Endothelial cell of umbilical vein (primary cell): ENCODE measurements at regions of chr22 and their contacts with region 1.

Region 1: DNA sequence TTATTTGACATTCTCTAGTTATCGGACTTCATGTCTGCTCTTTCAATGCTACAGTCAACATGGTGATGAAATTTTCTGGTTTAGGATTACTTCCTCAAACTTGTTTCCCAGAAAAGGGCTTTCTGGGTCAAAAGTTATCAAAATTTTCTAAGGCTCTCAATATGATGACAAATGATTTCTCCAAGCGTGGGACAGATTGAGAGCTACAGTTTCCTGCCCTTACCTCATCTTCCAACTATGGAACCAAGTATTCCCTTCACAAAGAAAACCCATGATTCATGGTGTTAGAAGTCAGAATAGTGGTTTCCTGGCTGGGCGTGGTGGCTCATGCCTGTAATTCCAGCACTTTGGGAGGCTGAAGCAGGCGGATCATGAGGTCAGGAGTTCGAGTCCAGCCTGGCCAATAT is 17.8 kb downstream of the MYO18B start:
- DNase-seq: peak; percentile 97
- H3K4me3 ChIP-seq: no peak overlapping the region
- H3K27ac ChIP-seq: peak overlapping the region; percentile 77
- H3K4me1 ChIP-seq: peaks cover 19% of the 10 kb centered on the region
- H3K27me3 ChIP-seq: no peaks in the 10 kb centered on the region
- CTCF ChIP-seq: no peak
- POLR2A ChIP-seq: no peak

Region 2: GRCh38 chr22:25702040-25702439 is 57.8 kb before region 1 on chr22:
- CTCF ChIA-PET with region 1: no interaction called
- POLR2A ChIA-PET with region 1: no interaction called
- dilution Hi-C with region 1: no loop called
- intact Hi-C with region 1: loop called (anchors 5 kb)
- DNase-seq: peak; percentile 29
- H3K4me3 ChIP-seq: no peak overlapping the region
- H3K27ac ChIP-seq: no peak overlapping the region
- H3K4me1 ChIP-seq: no peaks in the 10 kb centered on the region
- H3K27me3 ChIP-seq: no peaks in the 10 kb centered on the region
- CTCF ChIP-seq: no peak
- POLR2A ChIP-seq: no peak

Region 3: GRCh38 chr22:25747245-25747944 is 12.4 kb before region 1 on chr22:
- CTCF ChIA-PET with region 1: interaction called, 4 read pairs
- POLR2A ChIA-PET with region 1: no interaction called
- dilution Hi-C with region 1: no loop called
- intact Hi-C with region 1: loop called (anchors 1 kb)
- DNase-seq: peak; percentile 88
- H3K4me3 ChIP-seq: no peak overlapping the region
- H3K27ac ChIP-seq: peak overlapping the region; percentile 88
- H3K4me1 ChIP-seq: peaks cover 23% of the 10 kb centered on the region
- H3K27me3 ChIP-seq: no peaks in the 10 kb centered on the region
- CTCF ChIP-seq: no peak
- POLR2A ChIP-seq: no peak

Region 4: GRCh38 chr22:25942856-25943411 is 183.1 kb after region 1 on chr22:
- CTCF ChIA-PET with region 1: no interaction called
- POLR2A ChIA-PET with region 1: no interaction called
- dilution Hi-C with region 1: no loop called
- intact Hi-C with region 1: no loop called
- DNase-seq: no peak
- H3K4me3 ChIP-seq: no peak overlapping the region
- H3K27ac ChIP-seq: no peak overlapping the region
- H3K4me1 ChIP-seq: no peaks in the 10 kb centered on the region
- H3K27me3 ChIP-seq: no peaks in the 10 kb centered on the region
- CTCF ChIP-seq: no peak
- POLR2A ChIP-seq: no peak

Region 5: DNA sequence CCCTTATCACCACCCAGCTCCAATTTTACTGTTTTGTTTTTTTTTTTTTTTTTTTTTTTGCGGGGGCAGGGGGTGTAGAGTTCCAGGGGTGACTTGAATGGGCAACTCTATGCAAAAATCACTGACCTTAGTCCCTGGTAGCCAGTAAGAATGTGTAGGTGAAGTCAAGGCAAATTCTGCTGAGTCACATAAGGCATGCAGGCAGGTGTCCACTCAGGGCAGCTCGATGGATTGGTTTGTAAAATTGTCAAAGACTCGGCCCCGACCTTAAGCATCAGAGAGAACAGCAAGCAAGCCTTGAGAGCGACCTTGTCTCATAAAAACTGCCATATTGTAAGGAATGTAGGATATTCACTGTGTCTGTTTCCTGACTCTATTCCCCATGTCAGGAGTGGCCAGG is 258.1 kb after region 1 on chr22:
- CTCF ChIA-PET with region 1: no interaction called
- POLR2A ChIA-PET with region 1: no interaction called
- dilution Hi-C with region 1: no loop called
- intact Hi-C with region 1: no loop called
- DNase-seq: no peak
- H3K4me3 ChIP-seq: no peak overlapping the region
- H3K27ac ChIP-seq: no peak overlapping the region
- H3K4me1 ChIP-seq: no peaks in the 10 kb centered on the region
- H3K27me3 ChIP-seq: no peaks in the 10 kb centered on the region
- CTCF ChIP-seq: no peak
- POLR2A ChIP-seq: no peak